Mammary epithelial cell (primary cell): ENCODE measurements at regions of chr6 and their contacts with region 1.

Region 1: GRCh38 chr6:2639896-2640295 is 110.8 kb downstream of the MYLK4 start:
- DNase-seq: no peak
- H3K4me3 ChIP-seq: no peak overlapping the region
- H3K27ac ChIP-seq: no peak overlapping the region
- H3K4me1 ChIP-seq: peaks cover 2% of the 10 kb centered on the region
- H3K27me3 ChIP-seq: no peaks in the 10 kb centered on the region
- CTCF ChIP-seq: no peak

Region 2: DNA sequence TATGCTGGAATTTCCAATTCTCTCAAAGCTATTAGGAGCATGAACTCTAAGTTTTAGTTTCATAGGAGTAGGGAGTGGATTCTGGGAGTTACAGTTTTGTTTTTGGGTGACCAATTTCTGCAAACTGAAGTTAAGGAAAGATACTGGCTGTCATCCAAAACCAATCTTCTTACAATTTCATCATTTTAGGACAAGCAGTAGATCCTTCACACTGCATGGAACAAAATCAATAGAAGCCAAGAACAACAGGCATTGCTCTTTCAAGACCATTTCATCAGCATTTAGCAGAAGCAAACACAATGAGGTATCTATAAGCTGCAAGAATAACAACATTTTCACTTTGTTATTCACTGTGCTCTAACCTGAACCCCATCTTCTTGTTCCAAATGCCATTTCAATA is 567.4 kb before region 1 on chr6:
- CTCF ChIA-PET with region 1: no interaction called
- dilution Hi-C with region 1: no loop called
- in situ Hi-C with region 1: no loop called
- intact Hi-C with region 1: no loop called
- DNase-seq: no peak
- H3K4me3 ChIP-seq: no peak overlapping the region
- H3K27ac ChIP-seq: no peak overlapping the region
- H3K4me1 ChIP-seq: no peaks in the 10 kb centered on the region
- H3K27me3 ChIP-seq: no peaks in the 10 kb centered on the region
- CTCF ChIP-seq: no peak

Region 3: DNA sequence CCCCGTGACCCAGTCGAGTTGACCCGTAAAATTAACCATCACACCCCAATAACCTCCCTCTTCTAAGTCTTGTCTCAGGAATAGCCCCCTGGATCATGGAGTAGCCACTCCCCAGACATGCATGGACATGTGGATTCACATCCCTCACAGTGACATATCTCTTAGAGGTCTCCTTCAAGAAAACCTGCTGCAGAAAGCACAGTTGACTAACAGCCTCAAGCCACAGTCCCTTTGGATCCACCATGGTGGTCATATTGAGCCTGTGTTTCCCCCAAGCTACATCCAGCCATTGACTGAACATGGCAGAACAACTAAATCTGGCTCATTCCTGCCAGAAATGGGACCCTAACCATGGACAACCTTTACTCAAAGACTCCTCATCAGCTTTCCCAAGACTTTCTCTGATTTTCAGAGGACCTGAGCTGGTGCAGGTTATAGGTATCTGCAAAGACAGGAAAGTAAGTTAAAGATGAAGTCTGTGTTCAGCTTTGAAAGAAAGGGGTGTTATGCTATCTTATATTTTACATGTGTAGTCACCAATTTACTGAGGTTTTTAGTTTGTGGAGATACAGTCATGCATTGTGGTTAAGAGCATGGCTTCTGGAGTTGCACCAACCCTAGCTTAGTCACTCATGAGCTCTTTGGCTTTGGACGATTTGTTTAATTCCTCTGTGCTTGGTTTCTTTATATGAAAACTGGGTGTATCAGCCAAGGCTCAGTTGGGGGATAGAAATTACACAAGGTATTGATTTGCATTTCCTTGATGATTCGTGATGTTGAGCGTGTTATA is 108.3 kb before region 1 on chr6:
- CTCF ChIA-PET with region 1: no interaction called
- dilution Hi-C with region 1: loop called (anchors 5 kb)
- in situ Hi-C with region 1: no loop called
- intact Hi-C with region 1: no loop called
- DNase-seq: peak; percentile 95
- H3K4me3 ChIP-seq: no peak overlapping the region
- H3K27ac ChIP-seq: peak overlapping the region; percentile 64
- H3K4me1 ChIP-seq: peaks cover 15% of the 10 kb centered on the region
- H3K27me3 ChIP-seq: no peaks in the 10 kb centered on the region
- CTCF ChIP-seq: no peak

Region 4: GRCh38 chr6:2596222-2596621 is 43.7 kb before region 1 on chr6:
- CTCF ChIA-PET with region 1: no interaction called
- dilution Hi-C with region 1: no loop called
- in situ Hi-C with region 1: no loop called
- intact Hi-C with region 1: no loop called
- DNase-seq: no peak
- H3K4me3 ChIP-seq: no peak overlapping the region
- H3K27ac ChIP-seq: no peak overlapping the region
- H3K4me1 ChIP-seq: peaks cover 15% of the 10 kb centered on the region
- H3K27me3 ChIP-seq: no peaks in the 10 kb centered on the region
- CTCF ChIP-seq: no peak

Region 5: DNA sequence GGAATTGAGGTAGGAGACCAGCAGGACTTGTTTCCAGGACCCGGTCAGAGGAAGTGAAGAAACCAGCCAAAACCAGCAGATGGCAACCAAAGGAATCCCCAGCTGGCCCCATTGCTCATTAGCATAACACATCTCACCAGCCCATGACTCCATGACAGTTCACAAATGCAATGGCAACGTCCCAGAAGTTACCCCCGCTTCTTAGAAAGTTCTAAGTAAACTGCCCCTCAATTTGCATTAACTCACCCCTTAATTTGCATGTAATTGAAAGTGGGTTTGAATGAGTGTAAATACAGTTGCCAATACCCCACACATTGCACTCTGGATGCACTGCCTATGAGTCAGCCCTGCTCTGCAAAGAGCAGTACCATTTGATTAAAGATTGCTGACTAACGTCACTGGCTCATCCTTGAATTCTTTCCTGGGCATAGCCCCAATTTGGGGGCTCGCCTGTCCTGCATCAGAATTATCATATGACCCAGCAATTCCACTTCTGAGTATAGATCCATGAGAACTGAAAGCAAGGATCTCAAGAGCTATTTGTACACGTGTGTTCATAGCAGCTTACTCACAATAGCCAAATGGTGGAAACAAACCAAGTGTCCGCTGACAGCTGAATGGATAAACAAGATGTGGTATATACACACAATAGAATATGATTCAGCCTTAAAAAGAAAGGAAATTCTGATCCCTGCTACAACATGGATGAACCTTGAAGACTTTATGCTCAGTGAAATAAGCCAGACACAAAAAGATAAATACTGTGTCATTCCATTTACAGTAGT is 74.4 kb after region 1 on chr6:
- CTCF ChIA-PET with region 1: no interaction called
- dilution Hi-C with region 1: no loop called
- in situ Hi-C with region 1: no loop called
- intact Hi-C with region 1: no loop called
- DNase-seq: peak; percentile 58
- H3K4me3 ChIP-seq: no peak overlapping the region
- H3K27ac ChIP-seq: no peak overlapping the region
- H3K4me1 ChIP-seq: peaks cover 3% of the 10 kb centered on the region
- H3K27me3 ChIP-seq: no peaks in the 10 kb centered on the region
- CTCF ChIP-seq: no peak